ENCODE measurements at regions of chr16 and their contacts with region 1.

Region 1: DNA sequence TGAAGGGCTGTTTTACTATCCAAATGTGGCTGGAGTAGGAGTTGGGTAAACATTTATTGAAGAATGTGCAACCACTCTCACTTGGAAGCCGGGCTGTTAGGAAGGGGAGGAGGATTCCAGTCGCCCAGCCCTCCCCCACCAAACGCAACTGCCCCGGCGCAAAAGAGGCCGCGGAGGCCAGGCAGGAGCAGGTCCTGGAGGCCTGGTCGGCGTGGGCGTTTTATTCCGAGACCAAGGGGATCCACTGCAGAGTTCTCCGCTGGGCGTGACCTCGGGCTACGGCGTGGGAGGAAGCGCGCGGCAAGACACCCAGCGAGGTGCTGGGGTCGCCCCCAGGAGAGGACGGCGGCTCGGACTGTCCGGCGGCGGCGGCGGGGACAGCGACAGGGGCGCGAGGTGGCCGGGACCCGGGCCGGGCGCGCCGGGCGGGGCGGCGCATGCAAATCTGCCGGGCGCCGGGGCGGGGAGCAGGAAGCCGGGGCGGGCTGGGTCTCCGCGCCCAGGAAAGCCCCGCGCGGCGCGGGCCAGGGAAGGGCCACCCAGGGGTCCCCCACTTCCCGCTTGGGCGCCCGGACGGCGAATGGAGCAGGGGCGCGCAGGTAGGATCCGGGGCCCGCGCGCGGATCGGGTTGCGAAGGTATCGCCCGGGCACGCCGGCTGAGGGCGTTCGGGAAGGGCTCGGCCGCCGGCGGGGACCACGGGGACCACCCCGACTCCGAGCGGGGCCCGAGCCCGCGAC is at the start of gene IL4R:
- DNase-seq: peak; percentile 82
- H3K4me3 Mint-ChIP-seq: peak within 1 kb of the TSS; percentile 81
- H3K27ac Mint-ChIP-seq: peak within 1 kb of the TSS; percentile 51
- H3K4me1 Mint-ChIP-seq: peaks cover 32% of the 10 kb centered on the region
- H3K27me3 Mint-ChIP-seq: no peaks in the 10 kb centered on the region
- CTCF ChIP-seq: no peak
- total RNA-seq, gene IL4R: 50.4 and 51.9 TPM in 2 replicates

Region 2: DNA sequence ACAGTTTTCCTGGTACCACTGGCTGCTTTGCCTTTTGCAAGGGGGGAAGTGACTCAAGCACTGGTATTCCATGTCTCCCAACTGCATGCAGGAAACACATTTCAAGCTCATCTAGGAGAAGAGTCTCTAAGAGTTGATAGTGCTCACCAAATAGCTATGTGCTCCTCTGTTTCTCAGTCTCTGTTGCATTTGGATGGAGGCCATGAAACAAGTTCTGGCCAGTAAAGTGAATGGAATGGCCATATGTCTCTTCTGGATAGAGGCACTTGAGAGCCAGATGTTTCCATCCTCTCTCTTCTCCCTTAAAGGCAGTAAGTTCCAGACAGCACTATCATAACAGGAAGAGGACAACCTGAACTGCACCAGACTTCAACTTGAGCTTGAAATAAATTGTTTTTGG is 186.3 kb before region 1 on chr16:
- CTCF ChIA-PET with region 1: no interaction called
- POLR2A ChIA-PET with region 1: no interaction called
- intact Hi-C with region 1: no loop called
- DNase-seq: no peak
- H3K4me3 Mint-ChIP-seq: no peak overlapping the region
- H3K27ac Mint-ChIP-seq: no peak overlapping the region
- H3K4me1 Mint-ChIP-seq: no peaks in the 10 kb centered on the region
- H3K27me3 Mint-ChIP-seq: no peaks in the 10 kb centered on the region
- CTCF ChIP-seq: no peak

Region 3: GRCh38 chr16:27268376-27269299 is 45.0 kb before region 1 on chr16 and contains the start of gene NSMCE1:
- CTCF ChIA-PET with region 1: interaction called, 3 read pairs
- POLR2A ChIA-PET with region 1: interaction called, 47 read pairs
- intact Hi-C with region 1: loop called (anchors 2 kb)
- DNase-seq: peak; percentile 96
- H3K4me3 Mint-ChIP-seq: peak within 1 kb of the TSS; percentile 94
- H3K27ac Mint-ChIP-seq: peak within 1 kb of the TSS; percentile 99
- H3K4me1 Mint-ChIP-seq: peaks cover 27% of the 10 kb centered on the region
- H3K27me3 Mint-ChIP-seq: no peaks in the 10 kb centered on the region
- CTCF ChIP-seq: no peak
- total RNA-seq, gene NSMCE1: 106 and 119 TPM in 2 replicates

Region 4: GRCh38 chr16:27326738-27327585 is 13.4 kb after region 1 on chr16:
- CTCF ChIA-PET with region 1: interaction called, 5 read pairs
- POLR2A ChIA-PET with region 1: interaction called, 57 read pairs
- intact Hi-C with region 1: no loop called
- DNase-seq: peak; percentile 97
- H3K4me3 Mint-ChIP-seq: peak overlapping the region; percentile 56
- H3K27ac Mint-ChIP-seq: peak overlapping the region; percentile 92
- H3K4me1 Mint-ChIP-seq: peaks cover 31% of the 10 kb centered on the region
- H3K27me3 Mint-ChIP-seq: no peaks in the 10 kb centered on the region
- CTCF ChIP-seq: peak; percentile 9

Region 5: GRCh38 chr16:27355610-27356009 is 42.0 kb after region 1 on chr16:
- CTCF ChIA-PET with region 1: no interaction called
- POLR2A ChIA-PET with region 1: interaction called, 3 read pairs
- intact Hi-C with region 1: loop called (anchors 5 kb)
- DNase-seq: peak; percentile 52
- H3K4me3 Mint-ChIP-seq: no peak overlapping the region
- H3K27ac Mint-ChIP-seq: no peak overlapping the region
- H3K4me1 Mint-ChIP-seq: no peaks in the 10 kb centered on the region
- H3K27me3 Mint-ChIP-seq: no peaks in the 10 kb centered on the region
- CTCF ChIP-seq: peak; percentile 24

Region 6: GRCh38 chr16:27718201-27719105 is 404.9 kb after region 1 on chr16:
- CTCF ChIA-PET with region 1: no interaction called
- POLR2A ChIA-PET with region 1: no interaction called
- intact Hi-C with region 1: no loop called
- DNase-seq: no peak
- H3K4me3 Mint-ChIP-seq: no peak overlapping the region
- H3K27ac Mint-ChIP-seq: no peak overlapping the region
- H3K4me1 Mint-ChIP-seq: no peaks in the 10 kb centered on the region
- H3K27me3 Mint-ChIP-seq: no peaks in the 10 kb centered on the region
- CTCF ChIP-seq: no peak

Measured in MCF 10A (cell line).